Aorta (tissue), 5 donors: ENCODE measurements at regions of chr16 and their contacts with region 1.

Region 1: GRCh38 chr16:21300309-21301167 is 22.4 kb upstream of the CRYM start:
- DNase-seq: peak; percentile 92 to 96
- ATAC-seq: peak; percentile 99
- H3K4me3 ChIP-seq: peak overlapping the region; percentile 50 to 58
- H3K27ac ChIP-seq: peak overlapping the region in 1 of 2 donors; percentile 79
- H3K4me1 ChIP-seq: no peaks in the 10 kb centered on the region
- H3K27me3 ChIP-seq: no peaks in the 10 kb centered on the region

Region 2: GRCh38 chr16:20849587-20850390 is 450.7 kb before region 1 on chr16:
- intact Hi-C with region 1: loop called in 1 of 2 experiments (anchors 10 kb)
- DNase-seq: peak; percentile 75 to 87
- ATAC-seq: peak; percentile 85
- H3K4me3 ChIP-seq: no peak overlapping the region
- H3K27ac ChIP-seq: peak overlapping the region in 1 of 2 donors; percentile 92
- H3K4me1 ChIP-seq: peaks cover 10 to 16% of the 10 kb centered on the region in 2 donors
- H3K27me3 ChIP-seq: no peaks in the 10 kb centered on the region

Region 3: DNA sequence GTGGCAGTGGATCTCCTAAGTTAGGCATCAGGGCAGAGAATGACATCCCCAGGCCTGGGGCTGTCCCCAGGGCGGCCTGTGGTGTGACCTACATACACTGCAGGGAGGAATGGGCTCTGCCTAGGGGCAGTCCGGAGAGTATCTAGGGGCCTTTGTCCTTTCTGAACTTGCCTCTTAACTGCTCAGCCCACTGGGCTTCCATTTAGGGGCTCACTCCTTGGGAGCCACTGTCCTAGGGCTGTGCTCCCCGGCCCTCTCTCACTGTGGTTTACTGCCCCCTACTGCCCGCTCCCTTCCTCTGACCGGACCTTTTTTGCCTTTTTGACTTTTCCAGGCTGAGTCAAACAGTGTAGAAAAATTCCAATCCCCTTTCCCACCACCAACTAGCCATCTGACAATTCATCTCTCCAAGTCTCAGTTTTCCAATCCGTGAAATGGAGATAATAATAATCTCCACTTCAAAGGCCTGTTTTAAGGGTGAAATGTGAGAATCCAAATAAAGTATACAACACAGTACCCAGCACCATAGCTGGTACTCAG is 216.7 kb before region 1 on chr16:
- intact Hi-C with region 1: loop called in 1 of 2 experiments (anchors 10 kb)
- DNase-seq: peak; percentile 69 to 88
- ATAC-seq: peak; percentile 86
- H3K4me3 ChIP-seq: no peak overlapping the region
- H3K27ac ChIP-seq: no peak overlapping the region
- H3K4me1 ChIP-seq: no peaks in the 10 kb centered on the region
- H3K27me3 ChIP-seq: no peaks in the 10 kb centered on the region

Region 4: DNA sequence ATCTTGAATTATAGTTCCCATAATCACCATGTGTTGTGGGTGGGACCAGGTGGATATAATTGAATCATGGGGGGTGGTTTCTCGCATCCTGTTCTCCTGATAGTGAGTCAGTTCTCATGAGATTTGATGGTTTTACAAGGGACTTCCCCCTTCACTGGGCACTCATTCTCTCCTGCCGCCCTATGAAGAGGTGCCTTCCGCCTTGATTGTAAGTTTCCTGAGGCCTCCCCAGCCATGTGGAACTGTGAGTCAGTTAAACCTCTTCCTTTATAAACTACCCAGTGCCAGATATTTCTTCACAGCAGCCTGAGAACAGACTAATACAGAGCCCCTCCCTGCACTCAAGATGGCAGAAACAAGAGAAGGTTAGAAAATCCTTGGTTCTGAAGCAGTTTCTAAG is 115.7 kb before region 1 on chr16:
- intact Hi-C with region 1: loop called (anchors 2 to 5 kb)
- DNase-seq: no peak
- ATAC-seq: no peak
- H3K4me3 ChIP-seq: no peak overlapping the region
- H3K27ac ChIP-seq: no peak overlapping the region
- H3K4me1 ChIP-seq: peaks cover 0 to 1% of the 10 kb centered on the region in 2 donors
- H3K27me3 ChIP-seq: no peaks in the 10 kb centered on the region

Region 5: DNA sequence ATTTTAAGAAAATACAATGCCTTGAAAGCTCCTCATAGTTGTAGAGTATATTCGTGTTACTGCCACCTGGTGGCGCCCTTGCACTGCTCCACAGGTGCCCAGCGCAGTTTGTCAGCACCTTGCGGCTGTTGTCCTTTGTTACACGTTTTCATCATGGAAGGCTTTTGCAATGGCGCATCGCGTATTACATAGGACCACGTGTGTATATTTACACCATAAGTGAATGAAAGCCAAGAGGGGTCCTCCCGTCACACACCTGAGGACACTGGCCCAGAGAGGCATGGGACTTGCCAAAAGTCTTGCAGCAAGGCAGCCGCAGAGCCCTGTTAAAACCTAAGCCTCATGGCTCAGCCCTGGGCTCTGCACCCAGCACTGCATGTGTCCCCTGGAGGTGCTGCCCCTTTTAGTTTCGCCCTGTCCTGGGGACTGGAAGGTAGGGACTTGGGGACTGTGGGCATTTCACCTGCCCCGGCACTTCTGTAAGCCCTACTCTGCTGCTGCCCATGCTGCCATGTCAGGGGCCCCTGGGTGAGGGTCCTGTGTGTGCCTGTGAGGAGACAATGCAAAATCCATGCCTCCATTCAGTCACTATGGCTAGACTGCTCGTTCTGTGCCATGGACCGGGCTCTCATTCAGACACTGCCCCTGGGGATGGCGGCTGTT is 1020.9 kb after region 1 on chr16:
- intact Hi-C with region 1: loop called in 1 of 2 experiments (anchors 5 kb)
- DNase-seq: peak in 1 of 2 donors; percentile 85
- ATAC-seq: peak; percentile 75
- H3K4me3 ChIP-seq: no peak overlapping the region
- H3K27ac ChIP-seq: no peak overlapping the region
- H3K4me1 ChIP-seq: no peaks in the 10 kb centered on the region
- H3K27me3 ChIP-seq: no peaks in the 10 kb centered on the region